Endothelial cell of umbilical vein (primary cell): ENCODE measurements at regions of chr5 and their contacts with region 1.

Region 1: GRCh38 chr5:95858661-95859326 is 36.3 kb upstream of the GLRX start:
- DNase-seq: peak; percentile 99
- H3K4me3 ChIP-seq: peak overlapping the region in 2 of 3 experiments; percentile 1 to 18
- H3K27ac ChIP-seq: peak overlapping the region; percentile 98
- H3K4me1 ChIP-seq: peaks cover 58% of the 10 kb centered on the region
- H3K27me3 ChIP-seq: no peaks in the 10 kb centered on the region
- CTCF ChIP-seq: peak; percentile 93 to 99
- POLR2A ChIP-seq: no peak

Region 2: DNA sequence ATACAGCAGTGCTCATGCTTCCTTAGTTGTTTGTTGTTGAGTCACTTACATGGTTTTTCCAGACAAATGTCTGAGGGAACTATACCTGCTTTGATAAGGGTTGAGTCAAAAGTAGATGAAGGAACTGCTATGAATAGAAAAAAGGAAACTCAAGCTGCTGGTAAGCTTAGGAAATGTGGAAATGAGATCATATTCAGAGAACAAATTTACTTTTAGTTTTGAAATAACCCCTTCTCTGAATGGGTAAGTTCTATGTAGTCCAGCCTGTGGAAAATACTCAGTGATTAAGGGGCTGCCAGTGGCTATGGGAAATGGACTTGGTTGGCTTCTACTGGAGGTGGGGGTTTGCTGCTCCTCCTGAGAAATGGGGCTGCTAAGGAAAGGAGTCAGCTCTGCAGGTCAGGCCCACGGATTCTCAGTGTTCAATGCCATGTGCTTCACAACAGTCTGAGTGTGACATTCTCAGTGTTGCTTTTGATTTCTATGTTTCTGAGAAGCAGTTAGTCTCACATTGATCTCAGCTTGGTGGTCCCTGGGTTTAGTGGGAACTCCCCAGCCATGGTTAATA is 11.4 kb after region 1 on chr5:
- CTCF ChIA-PET with region 1: interaction called, 17 read pairs
- POLR2A ChIA-PET with region 1: no interaction called
- dilution Hi-C with region 1: no loop called
- intact Hi-C with region 1: loop called (anchors 1 kb)
- DNase-seq: peak; percentile 87
- H3K4me3 ChIP-seq: no peak overlapping the region
- H3K27ac ChIP-seq: peak overlapping the region; percentile 94
- H3K4me1 ChIP-seq: peaks cover 19% of the 10 kb centered on the region
- H3K27me3 ChIP-seq: no peaks in the 10 kb centered on the region
- CTCF ChIP-seq: no peak
- POLR2A ChIP-seq: no peak

Region 3: DNA sequence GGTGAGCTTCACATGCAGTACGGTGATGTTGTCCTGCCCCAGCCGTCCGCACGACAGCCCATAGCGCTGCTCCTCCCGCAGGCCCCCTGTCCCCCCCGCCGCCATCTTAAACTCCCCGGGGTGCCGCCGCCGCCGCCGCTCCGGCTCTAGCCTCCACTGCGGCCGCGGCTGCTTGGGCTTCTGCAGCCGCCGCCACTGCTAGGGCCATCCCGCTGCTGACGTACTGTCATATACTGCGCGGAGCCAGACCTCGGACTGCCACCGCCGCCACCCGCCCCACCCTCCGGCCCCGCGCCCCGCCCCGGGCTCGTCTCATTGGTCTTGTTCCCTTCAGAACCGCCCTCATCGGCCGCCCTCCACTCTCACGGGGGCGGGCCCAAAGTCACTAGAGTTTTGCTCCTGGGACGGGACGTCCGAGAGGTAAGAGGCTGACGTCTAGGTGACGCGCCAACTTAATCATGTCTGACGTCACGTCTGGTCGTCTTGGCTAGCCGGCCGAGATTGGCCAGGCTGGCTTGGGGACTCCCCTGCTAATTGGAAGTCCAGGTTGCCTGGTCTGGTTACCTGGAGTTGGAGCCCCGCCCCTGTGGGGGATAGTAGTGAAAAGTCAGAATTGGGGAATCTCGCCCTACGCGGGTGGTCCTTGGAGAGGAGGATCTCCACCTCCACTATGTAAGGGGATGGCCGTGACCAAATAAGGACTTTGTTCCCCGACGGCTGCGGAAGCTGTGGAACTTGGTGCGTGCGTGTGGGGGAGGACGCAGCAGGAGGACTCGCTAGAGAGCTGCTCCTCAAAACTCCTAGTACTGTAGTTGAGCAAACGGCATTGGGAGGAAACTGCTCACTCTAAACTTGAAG is 103.1 kb after region 1 on chr5 and contains the start of gene ELL2:
- CTCF ChIA-PET with region 1: interaction called, 6 read pairs
- POLR2A ChIA-PET with region 1: no interaction called
- dilution Hi-C with region 1: no loop called
- intact Hi-C with region 1: loop called (anchors 1 kb)
- DNase-seq: peak; percentile 98
- H3K4me3 ChIP-seq: peak within 1 kb of the TSS; percentile 66 to 94 (median 79)
- H3K27ac ChIP-seq: peak within 1 kb of the TSS; percentile 88
- H3K4me1 ChIP-seq: peaks cover 12% of the 10 kb centered on the region
- H3K27me3 ChIP-seq: no peaks in the 10 kb centered on the region
- CTCF ChIP-seq: no peak
- POLR2A ChIP-seq: peak; percentile 68
- total RNA-seq, gene ELL2: 26.0 and 39.8 TPM in 2 replicates

Region 4: GRCh38 chr5:96256778-96257470 is 398.1 kb after region 1 on chr5:
- CTCF ChIA-PET with region 1: interaction called, 3 read pairs
- POLR2A ChIA-PET with region 1: no interaction called
- dilution Hi-C with region 1: no loop called
- intact Hi-C with region 1: loop called (anchors 1 kb)
- DNase-seq: peak; percentile 64
- H3K4me3 ChIP-seq: no peak overlapping the region
- H3K27ac ChIP-seq: no peak overlapping the region
- H3K4me1 ChIP-seq: peaks cover 55% of the 10 kb centered on the region
- H3K27me3 ChIP-seq: no peaks in the 10 kb centered on the region
- CTCF ChIP-seq: no peak
- POLR2A ChIP-seq: no peak

Region 5: GRCh38 chr5:96565582-96566265 is 706.9 kb after region 1 on chr5:
- CTCF ChIA-PET with region 1: no interaction called
- POLR2A ChIA-PET with region 1: no interaction called
- dilution Hi-C with region 1: no loop called
- intact Hi-C with region 1: loop called (anchors 2 kb)
- DNase-seq: peak; percentile 79
- H3K4me3 ChIP-seq: no peak overlapping the region
- H3K27ac ChIP-seq: peak overlapping the region; percentile 97
- H3K4me1 ChIP-seq: peaks cover 71% of the 10 kb centered on the region
- H3K27me3 ChIP-seq: no peaks in the 10 kb centered on the region
- CTCF ChIP-seq: no peak
- POLR2A ChIP-seq: no peak